Dorsolateral prefrontal cortex (tissue), 120 donors: ENCODE measurements at regions of chr14 and their contacts with region 1.

Region 1: GRCh38 chr14:24431569-24432258 is 2.0 kb downstream of the KHNYN start:
- DNase-seq: peak in 9 of 10 donors; percentile 56 to 94 (median 79)
- H3K4me3 ChIP-seq: peak overlapping the region in 30 of 59 donors; percentile 2 to 82 (median 72)
- H3K27ac ChIP-seq: peak overlapping the region in 45 of 59 donors; percentile 4 to 97 (median 90)
- H3K27me3 ChIP-seq: no peaks in the 10 kb centered on the region
- CTCF ChIP-seq: peak; percentile 46 to 83 (median 74)

Region 2: DNA sequence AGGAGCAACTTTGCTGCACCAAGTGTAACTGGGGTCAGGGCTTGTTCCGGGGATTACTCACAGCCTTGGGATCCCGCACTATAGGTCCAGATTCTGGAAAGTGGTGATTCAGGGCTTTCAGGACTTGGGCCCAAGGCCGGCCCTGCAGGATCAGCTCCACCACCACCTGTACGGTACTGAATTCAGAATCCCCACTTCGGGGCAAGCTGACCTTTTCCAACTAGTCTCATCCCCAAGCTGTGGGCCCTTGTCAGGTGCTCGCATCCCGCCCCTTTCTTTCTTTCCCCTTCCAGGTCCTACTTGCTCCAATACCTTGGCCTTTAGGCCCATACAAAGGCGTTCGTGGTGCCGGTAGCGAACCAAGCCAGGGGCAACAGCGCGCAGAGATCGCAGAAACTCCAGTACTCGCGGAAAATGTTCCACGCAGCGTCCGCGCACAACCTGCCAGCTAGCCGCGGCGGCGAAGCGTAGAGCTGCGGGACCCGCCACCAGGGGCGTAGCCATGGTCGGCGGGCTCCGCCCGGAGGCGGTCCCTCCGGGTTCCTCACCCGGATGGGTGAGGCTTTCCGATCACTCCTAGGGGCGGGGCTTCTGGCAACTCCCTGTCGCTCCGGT is 189.8 kb before region 1 on chr14:
- intact Hi-C with region 1: loop called in 1 of 2 experiments (anchors 2 kb)
- DNase-seq: peak in 7 of 10 donors; percentile 88 to 95 (median 91)
- H3K4me3 ChIP-seq: peak overlapping the region; percentile 64 to 100 (median 87)
- H3K27ac ChIP-seq: peak overlapping the region; percentile 79 to 100 (median 98)
- H3K27me3 ChIP-seq: no peaks in the 10 kb centered on the region
- CTCF ChIP-seq: peak; percentile 38 to 84 (median 69)

Region 3: GRCh38 chr14:24310646-24311604 is 120.8 kb before region 1 on chr14 and contains the start of gene LTB4R:
- intact Hi-C with region 1: loop called in 1 of 2 experiments (anchors 5 kb)
- DNase-seq: peak in 9 of 10 donors; percentile 37 to 82 (median 69)
- H3K4me3 ChIP-seq: peak within 1 kb of the TSS; percentile 24 to 65 (median 51)
- H3K27ac ChIP-seq: peak within 1 kb of the TSS in 55 of 59 donors; percentile 6 to 86 (median 66)
- H3K27me3 ChIP-seq: peaks cover 0 to 8% (median under 1%) of the 10 kb centered on the region in 45 donors
- CTCF ChIP-seq: peak in 47 of 56 donors; percentile 8 to 71 (median 40)
- total RNA-seq, gene LTB4R: 1.1 to 7.0 (median 2.7) TPM

Region 4: GRCh38 chr14:24332268-24332993 is 99.3 kb before region 1 on chr14:
- intact Hi-C with region 1: loop called (anchors 2 to 5 kb)
- DNase-seq: peak in 8 of 10 donors; percentile 38 to 69 (median 60)
- H3K4me3 ChIP-seq: peak overlapping the region in 57 of 59 donors; percentile 1 to 64 (median 41)
- H3K27ac ChIP-seq: no peak overlapping the region
- H3K27me3 ChIP-seq: peaks cover 0 to 52% (median 42%) of the 10 kb centered on the region in 45 donors
- CTCF ChIP-seq: peak in 55 of 56 donors; percentile 32 to 78 (median 69)

Region 5: GRCh38 chr14:24366721-24367513 is 64.8 kb before region 1 on chr14:
- intact Hi-C with region 1: loop called (anchors 5 kb)
- DNase-seq: peak in 4 of 10 donors; percentile 45 to 90 (median 49)
- H3K4me3 ChIP-seq: peak overlapping the region; percentile 7 to 71 (median 53)
- H3K27ac ChIP-seq: peak overlapping the region in 57 of 59 donors; percentile 12 to 90 (median 76)
- H3K27me3 ChIP-seq: peaks cover 0 to 17% (median 0%) of the 10 kb centered on the region in 45 donors
- CTCF ChIP-seq: no peak

Region 6: DNA sequence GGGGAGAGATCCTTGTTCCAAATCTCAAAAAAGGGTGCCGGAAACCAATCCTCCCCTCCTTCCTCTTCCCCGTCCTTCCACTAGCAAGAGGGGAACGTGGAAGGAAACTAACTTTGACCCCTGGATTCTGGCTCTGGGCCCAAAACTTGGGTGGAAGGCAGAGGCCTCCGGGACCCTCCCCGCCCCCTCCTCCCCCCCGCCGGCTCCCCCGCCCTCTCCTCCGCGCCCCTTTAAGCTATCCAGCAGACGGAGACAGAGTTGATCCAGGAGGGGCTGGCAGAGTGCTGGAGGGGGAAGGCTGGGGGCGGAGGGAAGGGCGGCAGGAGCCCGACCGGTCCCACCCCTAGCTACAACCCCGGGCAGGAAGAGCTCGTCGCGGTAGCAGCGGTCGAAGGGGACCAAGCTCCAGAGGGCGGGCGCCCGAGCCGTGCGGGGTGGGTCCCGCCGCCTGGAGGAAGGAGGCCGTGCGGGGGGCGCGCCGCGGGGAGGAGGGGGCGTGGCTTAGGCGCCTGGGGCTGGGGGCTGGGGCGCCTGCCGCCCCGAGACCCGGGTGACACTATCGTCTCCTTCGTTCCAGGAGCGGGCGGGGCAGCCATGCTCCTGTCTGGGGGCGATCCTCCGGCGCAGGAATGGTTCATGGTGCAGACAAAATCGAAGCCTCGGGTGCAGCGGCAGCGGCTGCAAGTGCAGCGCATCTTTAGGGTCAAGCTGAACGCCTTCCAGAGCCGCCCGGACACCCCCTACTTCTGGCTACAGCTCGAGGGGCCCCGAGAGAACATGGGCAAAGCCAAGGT is 32.9 kb before region 1 on chr14 and contains the start of gene NYNRIN:
- intact Hi-C with region 1: no loop called
- DNase-seq: peak in 2 of 10 donors; percentile 20 to 51
- H3K4me3 ChIP-seq: peak within 1 kb of the TSS; percentile 30 to 83 (median 70)
- H3K27ac ChIP-seq: peak within 1 kb of the TSS in 43 of 59 donors; percentile 16 to 83 (median 64)
- H3K27me3 ChIP-seq: peaks cover 0 to 6% (median 0%) of the 10 kb centered on the region in 45 donors
- CTCF ChIP-seq: no peak
- total RNA-seq, gene NYNRIN: 2.3 to 15.3 (median 6.3) TPM